Pancreas (tissue), 10 donors: ENCODE measurements at regions of chr11 and their contacts with region 1.

Region 1: DNA sequence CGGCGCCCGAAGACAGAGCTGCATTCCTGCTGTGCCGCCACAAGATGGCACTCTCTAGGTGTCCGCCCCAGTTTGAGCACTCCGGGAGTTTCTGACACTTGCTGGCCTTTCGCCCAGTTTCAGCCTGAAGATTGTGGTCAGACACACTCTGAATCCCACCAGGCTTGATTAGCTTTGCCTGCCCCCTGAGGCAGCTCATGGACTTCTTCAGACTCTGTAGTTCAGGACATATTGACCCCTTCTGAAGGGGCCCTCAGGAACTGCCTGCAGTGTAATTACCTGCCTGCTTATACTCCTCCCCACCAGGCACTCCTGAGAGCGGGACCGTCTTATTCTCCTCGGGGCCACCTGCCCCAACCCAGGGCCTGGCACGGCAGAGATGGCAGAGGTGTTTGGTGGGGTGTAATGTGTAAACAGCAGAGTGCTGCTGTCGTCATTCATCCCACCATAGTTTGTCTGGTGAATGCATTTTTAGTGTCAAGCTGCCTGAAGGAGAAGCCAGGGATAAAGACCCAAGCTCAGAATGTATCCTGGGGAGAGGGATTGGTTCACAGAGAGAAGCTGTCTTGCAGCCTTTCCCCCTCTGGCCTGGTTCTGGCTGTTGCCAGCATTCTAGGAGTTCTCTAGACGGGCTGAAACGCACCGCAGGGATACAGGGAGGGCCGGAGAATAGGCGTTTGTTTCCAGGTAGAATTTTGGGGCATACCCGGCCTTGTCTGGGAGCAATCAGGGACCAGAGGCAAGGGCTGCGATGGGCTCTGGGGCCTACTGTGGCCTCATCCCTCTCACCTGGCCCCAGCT is 46.4 kb downstream of the EIF3F start:
- DNase-seq: peak; percentile 70 to 89 (median 84)
- ATAC-seq: peak; percentile 80 to 98 (median 94)
- H3K4me3 ChIP-seq: no peak overlapping the region
- H3K27ac ChIP-seq: no peak overlapping the region
- H3K4me1 ChIP-seq: no peaks in the 10 kb centered on the region
- H3K27me3 ChIP-seq: no peaks in the 10 kb centered on the region
- CTCF ChIP-seq: peak; percentile 64 to 89 (median 86)

Region 2: DNA sequence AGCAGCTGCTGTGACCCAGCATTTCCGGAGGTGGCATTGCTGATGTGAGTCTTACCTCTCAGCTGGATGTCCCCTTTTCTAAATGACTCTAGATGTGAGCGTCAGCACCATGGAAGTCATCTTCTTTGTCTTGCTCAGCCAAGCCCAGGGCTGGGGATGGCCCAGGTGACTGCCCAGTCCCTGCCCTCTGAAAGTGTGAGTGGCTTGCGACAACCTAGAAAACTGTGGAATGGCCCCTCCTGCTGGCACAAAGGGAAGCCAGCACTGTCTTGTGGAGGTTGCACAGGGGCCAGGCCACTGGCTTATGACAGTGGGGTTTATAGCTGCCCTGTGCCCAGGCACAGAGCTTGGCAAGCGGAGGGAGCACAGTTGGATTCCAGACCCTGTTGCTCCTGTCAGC is 53.7 kb after region 1 on chr11:
- intact Hi-C with region 1: loop called in 1 of 3 experiments (anchors 5 kb)
- DNase-seq: peak in 1 of 6 donors; percentile 43
- ATAC-seq: peak in 1 of 4 donors; percentile 42
- H3K4me3 ChIP-seq: no peak overlapping the region
- H3K27ac ChIP-seq: no peak overlapping the region
- H3K4me1 ChIP-seq: no peaks in the 10 kb centered on the region
- H3K27me3 ChIP-seq: no peaks in the 10 kb centered on the region
- CTCF ChIP-seq: no peak